K562 (cell line): ENCODE measurements at regions of chr18 and their contacts with region 1.

Region 1: DNA sequence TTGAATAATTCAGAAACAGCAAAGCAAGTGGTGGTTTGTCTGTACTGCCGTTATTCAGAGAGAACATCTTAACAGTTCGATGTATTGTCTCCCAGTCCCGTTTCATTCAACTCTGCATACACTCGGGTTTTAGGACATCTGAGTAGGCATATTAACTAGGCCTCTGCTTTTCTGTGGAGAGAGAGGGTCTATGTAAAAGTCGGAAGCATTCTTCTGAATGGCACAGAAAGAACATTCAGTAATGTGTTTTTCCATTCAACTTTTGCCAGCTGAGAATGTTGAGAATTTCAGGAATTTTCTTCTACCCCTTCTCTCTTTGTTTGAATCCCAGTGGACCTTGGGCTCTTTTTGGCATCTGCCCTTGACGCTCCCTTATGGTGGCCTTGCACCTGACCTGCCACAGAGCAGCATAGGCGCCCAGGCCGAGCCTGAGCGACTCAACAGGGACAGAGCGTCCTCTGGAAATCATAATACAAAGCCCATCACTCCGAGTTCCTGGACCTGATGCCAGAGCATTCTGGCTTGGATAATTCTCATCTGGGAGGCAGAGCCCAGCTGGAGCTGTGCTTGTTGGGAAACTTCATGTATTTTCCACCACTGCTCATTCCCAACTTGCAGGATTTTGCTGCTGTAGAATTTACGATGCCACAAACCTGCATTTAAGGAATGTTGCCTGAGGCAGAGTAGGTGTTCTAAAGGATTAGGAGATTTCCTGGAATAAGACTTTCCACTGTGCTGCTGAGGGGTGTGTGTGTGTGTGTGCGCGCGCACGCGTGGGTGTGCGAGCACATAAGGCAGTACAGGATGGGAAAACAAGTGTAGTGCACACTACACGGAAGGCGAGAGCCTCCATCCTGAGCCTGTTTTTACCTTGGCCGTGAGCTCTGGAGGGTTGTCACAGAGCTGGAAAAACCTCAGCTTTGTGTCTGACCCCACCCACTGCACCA is 77.2 kb upstream of the TXNDC2 start:
- DNase-seq: peak in 1 of 4 experiments; percentile 58
- ATAC-seq: peak; percentile 24
- H3K4me3 ChIP-seq: no peak overlapping the region
- H3K27ac ChIP-seq: peak overlapping the region; percentile 6; the same call in 2 of the 3 replicates
- H3K4me1 ChIP-seq: peaks cover 33 to 45% of the 10 kb centered on the region in 2 experiments
- H3K27me3 ChIP-seq: no peaks in the 10 kb centered on the region
- CTCF ChIP-seq: no peak
- EP300 ChIP-seq: no peak
- POLR2A ChIP-seq: no peak
- RAD21 ChIP-seq: no peak

Region 2: GRCh38 chr18:9683407-9684396 is 124.9 kb before region 1 on chr18:
- CTCF ChIA-PET with region 1: no interaction called
- POLR2A ChIA-PET with region 1: interaction called, 3 read pairs
- in situ Hi-C with region 1: no loop called
- intact Hi-C with region 1: loop called (anchors 5 kb)
- DNase-seq: peak in 3 of 4 experiments; percentile 51 to 91 (median 63)
- ATAC-seq: peak; percentile 91
- H3K4me3 ChIP-seq: no peak overlapping the region
- H3K27ac ChIP-seq: peak overlapping the region; percentile 81
- H3K4me1 ChIP-seq: peaks cover 10 to 49% of the 10 kb centered on the region in 2 experiments; a peak in 4 of 5 replicates
- H3K27me3 ChIP-seq: no peaks in the 10 kb centered on the region
- CTCF ChIP-seq: peak; percentile 76 to 86 (median 81)
- EP300 ChIP-seq: 0 out of 2 replicates have a peak, but pooled peaks have one; percentile 15
- POLR2A ChIP-seq: no peak
- RAD21 ChIP-seq: peak; percentile 95 to 97

Region 3: DNA sequence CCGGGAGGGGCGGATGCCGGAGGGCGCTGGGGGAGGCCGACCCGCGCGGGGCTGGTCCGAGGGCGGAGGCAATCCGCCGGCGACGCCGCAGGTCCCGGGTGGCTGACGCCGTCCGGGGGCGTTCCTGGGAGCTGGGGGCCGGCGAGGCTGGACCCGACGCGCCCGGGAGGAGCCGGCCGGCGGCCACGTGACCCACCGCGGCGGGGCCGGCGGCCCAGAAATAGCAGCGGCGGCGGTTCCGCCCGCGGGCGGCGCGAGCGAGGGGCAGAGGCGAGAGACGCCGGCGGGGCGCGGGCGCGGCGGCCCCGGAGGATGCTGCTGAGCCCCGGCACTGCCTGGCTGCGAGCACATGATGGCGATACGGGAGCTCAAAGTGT is 100.5 kb before region 1 on chr18 and contains the start of gene RAB31:
- CTCF ChIA-PET with region 1: no interaction called
- POLR2A ChIA-PET with region 1: interaction called, 3 read pairs
- in situ Hi-C with region 1: no loop called
- intact Hi-C with region 1: loop called (anchors 5 kb)
- DNase-seq: peak; percentile 87 to 98 (median 94)
- ATAC-seq: peak; percentile 86
- H3K4me3 ChIP-seq: peak within 1 kb of the TSS; percentile 76
- H3K27ac ChIP-seq: peak within 1 kb of the TSS; percentile 75
- H3K4me1 ChIP-seq: peaks cover 47 to 65% of the 10 kb centered on the region in 2 experiments
- H3K27me3 ChIP-seq: no peaks in the 10 kb centered on the region
- CTCF ChIP-seq: 0 out of 6 replicates have a peak, but pooled peaks of 1 of the 3 experiments have one; percentile 14
- EP300 ChIP-seq: no peak
- POLR2A ChIP-seq: no peak; the same call in 1 of the 2 replicates
- RAD21 ChIP-seq: peak in 1 of 2 experiments; percentile 19; a peak in 2 of 4 replicates
- polyA plus RNA-seq, gene RAB31: 20.7 to 25.6 TPM

Region 4: DNA sequence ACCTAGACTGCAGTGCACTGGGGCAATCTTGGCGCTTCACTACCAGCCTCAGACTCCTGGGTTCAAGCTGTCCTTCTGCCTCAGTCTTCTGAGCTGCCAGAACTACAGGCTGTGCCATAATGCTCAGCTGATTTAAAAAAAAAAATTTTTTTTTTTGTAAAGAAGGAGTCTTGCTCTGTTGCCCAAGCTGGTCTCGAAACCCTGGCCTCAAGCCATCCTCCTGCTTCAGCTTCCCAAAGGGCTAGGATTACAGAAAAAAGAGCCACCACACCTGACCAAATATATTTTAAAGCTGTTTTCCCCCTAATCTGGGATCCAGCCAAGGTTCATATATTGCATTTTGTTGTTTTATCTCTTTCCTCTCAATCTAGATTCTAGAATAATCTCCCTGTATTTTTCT is 18.3 kb before region 1 on chr18:
- CTCF ChIA-PET with region 1: no interaction called
- POLR2A ChIA-PET with region 1: interaction called, 10 read pairs
- in situ Hi-C with region 1: no loop called
- intact Hi-C with region 1: no loop called
- DNase-seq: no peak
- ATAC-seq: no peak
- H3K4me3 ChIP-seq: no peak overlapping the region
- H3K27ac ChIP-seq: no peak overlapping the region
- H3K4me1 ChIP-seq: peaks cover 0 to 8% of the 10 kb centered on the region in 2 experiments; a peak in 2 of 5 replicates
- H3K27me3 ChIP-seq: no peaks in the 10 kb centered on the region
- CTCF ChIP-seq: no peak
- EP300 ChIP-seq: no peak
- POLR2A ChIP-seq: no peak
- RAD21 ChIP-seq: no peak

Region 5: DNA sequence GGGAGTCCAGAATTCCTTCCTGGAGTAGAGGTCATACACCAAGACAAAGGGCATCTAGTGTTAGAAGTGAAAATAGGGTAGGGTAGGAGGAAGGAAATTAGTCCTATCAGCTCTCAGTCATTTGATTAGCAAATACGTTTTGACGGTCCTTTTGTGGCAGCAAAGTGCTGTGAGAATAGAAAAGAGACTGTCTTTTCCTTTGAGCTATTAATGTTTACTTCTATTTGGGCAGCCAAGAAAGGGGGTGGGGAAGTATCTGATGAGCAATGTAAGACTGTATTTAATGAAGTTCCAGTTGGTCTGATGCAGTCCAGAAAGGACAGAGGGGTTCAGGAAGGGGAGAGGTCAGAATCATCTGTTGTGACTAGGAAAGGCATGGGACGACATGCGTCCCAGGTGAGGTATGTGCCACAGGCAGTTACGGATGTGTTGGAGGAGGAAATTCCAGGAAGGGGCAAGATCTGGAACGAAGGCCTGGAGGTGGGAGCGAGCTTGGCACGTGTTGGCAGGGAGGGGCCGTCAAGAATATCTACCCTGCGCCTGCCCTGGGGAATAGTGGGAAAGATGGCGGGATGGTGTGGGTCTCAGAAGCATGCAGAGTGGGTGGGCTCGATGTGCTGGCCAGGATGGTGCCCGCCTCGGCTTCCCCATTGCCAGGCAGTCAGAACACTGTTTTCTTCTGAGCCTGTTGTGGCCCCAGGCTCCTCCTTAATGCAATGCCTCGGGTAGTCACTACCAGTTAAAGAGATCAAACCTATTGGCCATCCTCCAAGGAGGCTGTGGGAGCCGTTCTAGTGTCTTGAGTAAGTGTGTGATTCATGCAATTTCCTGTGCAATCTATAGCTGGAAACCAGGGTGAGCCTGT is 19.3 kb after region 1 on chr18:
- CTCF ChIA-PET with region 1: no interaction called
- POLR2A ChIA-PET with region 1: interaction called, 8 read pairs
- in situ Hi-C with region 1: no loop called
- intact Hi-C with region 1: loop called (anchors 2 kb)
- DNase-seq: peak; percentile 42 to 94 (median 62)
- ATAC-seq: peak; percentile 81
- H3K4me3 ChIP-seq: no peak overlapping the region
- H3K27ac ChIP-seq: peak overlapping the region; percentile 83
- H3K4me1 ChIP-seq: peaks cover 50 to 71% of the 10 kb centered on the region in 2 experiments
- H3K27me3 ChIP-seq: no peaks in the 10 kb centered on the region
- CTCF ChIP-seq: no peak
- EP300 ChIP-seq: peak; percentile 64; the same call in 1 of the 2 replicates
- POLR2A ChIP-seq: no peak
- RAD21 ChIP-seq: peak; percentile 19 to 21; a peak in 1 of 4 replicates

Region 6: GRCh38 chr18:9876867-9877654 is 68.5 kb after region 1 on chr18:
- CTCF ChIA-PET with region 1: interaction called, 3 read pairs
- POLR2A ChIA-PET with region 1: interaction called, 6 read pairs
- in situ Hi-C with region 1: no loop called
- intact Hi-C with region 1: loop called (anchors 1 kb)
- DNase-seq: peak; percentile 80 to 98 (median 88)
- ATAC-seq: peak; percentile 85
- H3K4me3 ChIP-seq: peak overlapping the region; percentile 7; the same call in 1 of the 2 replicates
- H3K27ac ChIP-seq: peak overlapping the region; percentile 97
- H3K4me1 ChIP-seq: peaks cover 23 to 57% of the 10 kb centered on the region in 2 experiments
- H3K27me3 ChIP-seq: no peaks in the 10 kb centered on the region
- CTCF ChIP-seq: peak in 1 of 3 experiments; percentile 15; a peak in 2 of 6 replicates
- EP300 ChIP-seq: peak; percentile 96
- POLR2A ChIP-seq: peak; percentile 71; the same call in 1 of the 2 replicates
- RAD21 ChIP-seq: peak; percentile 34 to 38

Region 7: DNA sequence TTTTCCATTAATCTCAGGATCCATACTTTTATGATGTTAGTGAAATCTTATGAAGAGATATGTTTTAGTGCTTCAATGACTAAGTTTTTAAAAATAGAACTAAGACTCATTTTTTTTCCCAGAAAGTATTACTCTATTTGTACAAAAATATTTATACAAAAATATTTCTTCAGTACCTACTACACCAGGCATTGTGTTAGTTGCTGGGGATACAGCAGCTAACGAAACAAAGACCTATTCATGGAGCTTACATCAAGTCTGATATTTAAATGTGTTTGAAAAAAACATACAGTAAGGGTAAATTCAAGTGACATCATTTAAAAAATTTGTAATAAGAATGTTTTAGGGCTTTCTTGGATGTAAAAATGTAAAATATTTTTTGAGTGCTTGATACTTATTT is 116.8 kb after region 1 on chr18:
- CTCF ChIA-PET with region 1: no interaction called
- POLR2A ChIA-PET with region 1: interaction called, 11 read pairs
- in situ Hi-C with region 1: no loop called
- intact Hi-C with region 1: no loop called
- DNase-seq: no peak
- ATAC-seq: no peak
- H3K4me3 ChIP-seq: no peak overlapping the region
- H3K27ac ChIP-seq: peak overlapping the region; percentile 69; the same call in 2 of the 3 replicates
- H3K4me1 ChIP-seq: peaks cover 5 to 77% of the 10 kb centered on the region in 2 experiments
- H3K27me3 ChIP-seq: no peaks in the 10 kb centered on the region
- CTCF ChIP-seq: no peak
- EP300 ChIP-seq: no peak
- POLR2A ChIP-seq: no peak
- RAD21 ChIP-seq: no peak